Mucosa of descending colon (tissue), 3 donors: ENCODE measurements at regions of chr11 and their contacts with region 1.

Region 1: GRCh38 chr11:46537537-46538295 is 56.1 kb downstream of the AMBRA1 start:
- DNase-seq: peak in 2 of 3 donors; percentile 67 to 69
- ATAC-seq: peak; percentile 77
- H3K4me3 ChIP-seq: no peak overlapping the region
- H3K4me1 ChIP-seq: peaks cover 6% of the 10 kb centered on the region
- CTCF ChIP-seq: peak; percentile 74

Region 2: GRCh38 chr11:46392421-46393230 is 145.1 kb before region 1 on chr11:
- intact Hi-C with region 1: loop called (anchors 5 kb)
- DNase-seq: peak; percentile 86 to 92 (median 88)
- ATAC-seq: peak; percentile 88
- H3K4me3 ChIP-seq: no peak overlapping the region
- H3K4me1 ChIP-seq: peaks cover 40% of the 10 kb centered on the region
- CTCF ChIP-seq: no peak

Region 3: DNA sequence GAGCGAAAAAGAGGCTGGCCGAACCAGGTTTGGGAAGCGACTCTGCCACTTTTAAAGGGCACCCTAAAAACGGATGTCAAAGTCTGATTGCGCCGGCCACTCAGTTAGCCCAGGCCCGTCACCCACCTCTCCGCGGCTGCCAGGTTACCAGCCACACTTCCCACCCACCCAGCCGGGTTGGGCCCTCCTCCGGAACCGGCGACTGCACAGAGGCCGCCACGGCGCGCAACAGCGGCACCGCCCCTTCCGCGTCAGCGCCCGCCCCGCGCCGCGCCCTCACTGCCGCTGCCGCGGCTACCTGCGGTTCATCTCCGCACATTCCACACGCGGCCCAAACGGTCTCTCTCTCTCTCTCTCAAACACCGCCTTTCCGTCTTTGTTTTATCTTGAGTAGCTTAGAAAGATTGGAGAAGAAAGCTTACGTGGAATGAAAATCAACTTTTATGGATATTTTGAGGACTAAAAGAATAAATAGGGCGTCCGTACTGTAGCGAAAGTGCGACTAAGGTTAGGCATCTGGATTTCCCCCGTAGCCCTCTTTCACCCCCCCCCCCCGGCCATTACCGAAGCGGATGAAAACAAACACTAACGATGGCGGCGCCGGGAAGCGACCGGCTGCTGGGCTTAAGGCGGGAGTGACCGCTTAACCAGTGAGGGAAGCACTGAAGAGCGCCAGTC is 79.4 kb after region 1 on chr11 and contains the starts of genes ATG13 and HARBI1:
- intact Hi-C with region 1: loop called in 1 of 2 experiments (anchors 5 kb)
- DNase-seq: peak; percentile 90 to 94 (median 93)
- ATAC-seq: peak; percentile 98
- H3K4me3 ChIP-seq: peak within 1 kb of the TSS; percentile 94
- H3K4me1 ChIP-seq: peaks cover 25% of the 10 kb centered on the region
- CTCF ChIP-seq: no peak
- total RNA-seq, gene ATG13: 61.6 to 81.4 (median 62.3) TPM
- total RNA-seq, gene HARBI1: 4.5 to 6.0 (median 5.7) TPM